Natural killer cell (primary cell): ENCODE measurements at regions of chr19 and their contacts with region 1.

Region 1: GRCh38 chr19:10085641-10086590 is at the start of gene SHFL:
- DNase-seq: peak; percentile 87 to 93
- ATAC-seq: peak; percentile 97 to 98 (median 97)
- H3K4me3 ChIP-seq: peak within 1 kb of the TSS; percentile 100
- H3K4me3 Mint-ChIP-seq: peak within 1 kb of the TSS; percentile 89
- H3K27ac ChIP-seq: peak within 1 kb of the TSS; percentile 87
- H3K27ac Mint-ChIP-seq: peak within 1 kb of the TSS; percentile 82 to 87
- H3K4me1 ChIP-seq: peaks cover 20% of the 10 kb centered on the region
- H3K4me1 Mint-ChIP-seq: peaks cover 13 to 19% of the 10 kb centered on the region in 2 donors
- H3K27me3 ChIP-seq: no peaks in the 10 kb centered on the region
- H3K27me3 Mint-ChIP-seq: no peaks in the 10 kb centered on the region
- CTCF ChIP-seq: no peak
- total RNA-seq, gene SHFL: 107 to 111 (median 107) TPM

Region 2: DNA sequence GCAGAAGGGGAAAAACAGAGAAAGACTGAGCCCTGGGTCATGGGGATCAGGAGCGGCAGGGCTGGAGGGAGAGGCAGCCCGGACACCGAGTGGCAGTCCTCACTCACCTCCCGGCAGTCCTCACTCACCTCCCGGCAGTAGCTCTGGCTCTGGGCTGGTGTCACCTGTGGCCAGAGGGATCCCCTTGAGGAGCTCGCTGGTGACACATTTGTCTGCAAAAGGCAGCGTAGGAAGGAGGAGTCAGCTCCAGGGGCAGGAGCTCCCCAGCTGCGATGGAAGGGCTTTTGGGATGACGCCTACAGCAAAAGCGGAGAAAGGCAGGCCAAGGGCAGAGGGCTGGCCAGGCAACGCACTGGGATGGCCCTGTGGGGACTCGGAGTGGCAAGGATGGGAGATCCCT is 33.0 kb after region 1 on chr19:
- intact Hi-C with region 1: loop called (anchors 1 kb)
- DNase-seq: peak in 1 of 2 donors; percentile 28
- ATAC-seq: no peak
- H3K4me3 ChIP-seq: peak overlapping the region; percentile 66
- H3K4me3 Mint-ChIP-seq: peak overlapping the region; percentile 92
- H3K27ac ChIP-seq: peak overlapping the region; percentile 64
- H3K27ac Mint-ChIP-seq: peak overlapping the region; percentile 90
- H3K4me1 ChIP-seq: peaks cover 58% of the 10 kb centered on the region
- H3K4me1 Mint-ChIP-seq: peaks cover 20 to 45% of the 10 kb centered on the region in 2 donors
- H3K27me3 ChIP-seq: no peaks in the 10 kb centered on the region
- H3K27me3 Mint-ChIP-seq: no peaks in the 10 kb centered on the region
- CTCF ChIP-seq: no peak

Region 3: GRCh38 chr19:10380313-10381102 is 294.6 kb after region 1 on chr19 and contains the start of gene TYK2:
- intact Hi-C with region 1: no loop called
- DNase-seq: peak; percentile 98 to 99
- ATAC-seq: peak; percentile 90 to 97 (median 92)
- H3K4me3 ChIP-seq: peak within 1 kb of the TSS; percentile 92
- H3K4me3 Mint-ChIP-seq: peak within 1 kb of the TSS; percentile 94
- H3K27ac ChIP-seq: peak within 1 kb of the TSS; percentile 93
- H3K27ac Mint-ChIP-seq: peak within 1 kb of the TSS; percentile 97
- H3K4me1 ChIP-seq: peaks cover 20% of the 10 kb centered on the region
- H3K4me1 Mint-ChIP-seq: peaks cover 19 to 26% of the 10 kb centered on the region in 2 donors
- H3K27me3 ChIP-seq: no peaks in the 10 kb centered on the region
- H3K27me3 Mint-ChIP-seq: no peaks in the 10 kb centered on the region
- CTCF ChIP-seq: no peak
- total RNA-seq, gene TYK2: 401 to 469 (median 454) TPM